ENCODE measurements at regions of chrX and their contacts with region 1.

Region 1: DNA sequence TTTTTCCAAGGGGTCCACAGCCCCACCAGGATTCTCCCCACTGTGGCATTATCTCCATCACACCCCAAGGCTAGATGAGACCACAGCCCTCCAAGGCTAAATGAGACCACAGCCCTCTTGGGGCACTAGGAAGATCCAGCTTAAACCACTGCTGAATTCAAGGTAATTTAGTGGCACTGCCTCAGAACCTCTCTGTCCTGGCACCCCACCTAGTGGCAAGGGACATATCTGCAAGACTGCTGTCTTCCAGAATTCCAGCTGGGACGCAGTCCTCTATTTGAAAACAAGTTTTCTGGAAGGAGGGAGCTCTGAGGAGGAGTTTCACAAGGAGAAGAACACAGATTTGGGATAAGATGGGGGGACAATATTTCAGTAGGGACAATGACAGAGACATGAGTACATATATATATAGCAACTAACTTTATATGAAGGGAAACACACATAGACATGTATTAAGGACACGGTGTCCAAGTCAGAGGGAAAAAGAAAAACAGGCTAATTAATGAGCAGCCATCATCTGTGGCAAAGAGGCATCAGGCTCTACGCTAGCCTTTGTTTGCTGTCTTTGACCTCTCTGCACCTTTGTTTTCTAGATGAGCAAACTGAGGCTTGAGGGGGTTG is 9.3 kb downstream of the CETN2 start:
- DNase-seq: peak; percentile 38 to 80
- H3K4me3 ChIP-seq: no peak overlapping the region
- H3K4me1 ChIP-seq: no peaks in the 10 kb centered on the region; the same call in 1 of the 2 replicates
- H3K27me3 ChIP-seq: peaks cover 19% of the 10 kb centered on the region

Region 2: DNA sequence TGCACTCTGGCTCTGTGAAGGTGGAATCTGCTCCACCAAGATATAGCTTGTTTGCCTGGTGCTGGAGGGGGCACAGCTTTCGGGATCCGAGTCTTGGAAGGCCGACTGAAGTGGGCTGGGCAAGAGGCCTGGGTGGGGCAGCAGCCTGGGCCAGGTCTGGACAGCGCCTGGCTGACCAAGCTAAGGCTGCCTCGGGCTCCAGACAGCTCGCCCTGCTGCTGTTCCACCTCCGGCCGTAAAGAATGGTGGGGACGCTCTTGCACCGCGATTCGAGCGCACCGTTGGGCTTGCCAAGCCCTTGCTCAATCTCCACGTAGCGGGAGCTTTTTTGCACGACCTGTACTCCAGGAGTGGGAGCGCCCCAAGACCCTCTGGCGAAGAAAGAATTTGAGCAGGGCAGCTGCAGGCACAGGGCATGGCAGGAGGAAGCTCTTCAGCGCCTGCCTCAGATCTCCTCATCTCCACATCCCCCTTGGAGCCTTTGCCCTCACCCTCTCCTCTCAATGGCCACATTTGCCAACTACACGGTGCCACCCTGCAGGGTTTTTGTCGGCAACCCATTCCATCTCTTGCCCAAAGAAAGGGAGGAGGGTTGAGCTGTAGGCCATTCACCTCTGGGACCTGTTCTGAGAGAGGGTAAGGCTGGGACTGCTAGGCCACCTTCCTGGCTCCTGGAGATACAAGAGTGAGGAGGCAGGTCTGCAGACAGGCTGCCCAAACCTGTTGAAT is 1067.8 kb before region 1 on chrX:
- in situ Hi-C with region 1: loop called (anchors 25 kb)
- DNase-seq: peak; percentile 6 to 69
- H3K4me3 ChIP-seq: no peak overlapping the region
- H3K4me1 ChIP-seq: no peaks in the 10 kb centered on the region
- H3K27me3 ChIP-seq: peaks cover 1% of the 10 kb centered on the region; the same call in 1 of the 2 replicates

Region 3: DNA sequence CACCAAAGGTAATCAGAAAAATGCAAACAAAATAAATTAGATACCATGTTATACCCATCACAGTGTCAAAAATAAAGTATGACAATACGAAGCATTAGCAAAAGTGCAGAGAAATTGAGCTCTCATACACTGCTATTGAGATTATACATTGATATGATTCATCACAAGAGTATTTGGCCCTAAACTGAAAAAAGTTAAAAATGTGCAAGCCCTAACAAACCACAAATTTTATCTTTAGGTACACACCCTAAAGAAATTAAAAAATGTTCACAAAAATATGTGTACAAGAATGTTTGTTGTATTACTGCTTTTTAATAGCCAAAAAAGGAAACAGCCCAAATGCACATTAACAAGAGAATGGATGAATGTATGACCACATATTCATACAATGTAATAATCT is 545.0 kb before region 1 on chrX:
- in situ Hi-C with region 1: no loop called
- DNase-seq: no peak
- H3K4me3 ChIP-seq: no peak overlapping the region
- H3K4me1 ChIP-seq: no peaks in the 10 kb centered on the region
- H3K27me3 ChIP-seq: no peaks in the 10 kb centered on the region

Region 4: GRCh38 chrX:152641996-152642395 is 179.3 kb before region 1 on chrX:
- in situ Hi-C with region 1: loop called (anchors 5 kb)
- DNase-seq: peak in 1 of 2 experiments; percentile 20
- H3K4me3 ChIP-seq: no peak overlapping the region
- H3K4me1 ChIP-seq: peaks cover 11% of the 10 kb centered on the region
- H3K27me3 ChIP-seq: no peaks in the 10 kb centered on the region

Region 5: DNA sequence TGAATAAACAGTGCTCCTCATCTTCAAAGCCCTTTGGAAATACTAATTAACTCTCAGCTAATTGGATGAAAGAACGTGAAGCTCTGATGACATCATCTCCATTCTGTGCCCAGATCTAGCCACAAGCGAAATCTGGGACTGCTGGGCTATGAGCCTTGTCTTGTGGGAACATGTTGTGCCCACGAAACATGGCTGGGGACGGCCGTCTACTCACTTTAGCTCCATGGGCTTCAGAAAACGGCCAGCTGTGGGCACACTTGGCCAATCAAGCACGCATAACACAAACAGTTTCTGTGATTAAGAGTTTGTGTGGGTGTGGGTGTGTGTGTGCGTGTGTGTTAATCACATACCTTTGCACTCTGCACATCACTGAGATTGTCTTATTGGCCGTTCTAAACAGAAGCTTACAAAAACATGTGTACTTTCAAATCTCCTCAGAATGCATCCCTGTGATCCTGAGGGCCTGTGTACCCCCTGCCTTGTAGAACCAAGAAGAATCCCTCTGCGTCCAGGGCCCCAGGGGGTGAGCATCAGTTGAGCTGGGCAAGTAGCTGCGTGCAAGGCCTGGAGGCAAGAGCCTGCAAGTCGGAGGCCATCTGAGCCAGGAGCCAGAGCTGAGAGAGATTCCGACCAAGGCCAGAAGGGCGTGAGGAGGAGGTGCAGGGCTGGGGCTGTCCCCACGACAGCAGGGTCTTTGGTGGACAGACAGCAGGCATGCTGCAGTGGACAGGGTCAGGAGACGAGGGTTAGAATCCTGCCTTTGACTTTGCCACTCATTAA is 57.9 kb after region 1 on chrX:
- in situ Hi-C with region 1: no loop called
- DNase-seq: no peak
- H3K4me3 ChIP-seq: no peak overlapping the region
- H3K4me1 ChIP-seq: no peaks in the 10 kb centered on the region
- H3K27me3 ChIP-seq: peaks cover 8% of the 10 kb centered on the region; the same call in 1 of the 2 replicates

Region 6: GRCh38 chrX:153052534-153052933 is 231.3 kb after region 1 on chrX:
- in situ Hi-C with region 1: no loop called
- DNase-seq: no peak
- H3K4me3 ChIP-seq: no peak overlapping the region
- H3K4me1 ChIP-seq: no peaks in the 10 kb centered on the region
- H3K27me3 ChIP-seq: no peaks in the 10 kb centered on the region